ENCODE measurements at regions of chr12 and their contacts with region 1.

Region 1: GRCh38 chr12:8544295-8544694 is 3.6 kb upstream of the CLEC4E start:
- DNase-seq: peak; percentile 56 to 82 (median 62)
- H3K4me3 ChIP-seq: no peak overlapping the region
- H3K4me3 Mint-ChIP-seq: peak overlapping the region in 6 of 7 donors; percentile 6 to 59 (median 32)
- H3K27ac ChIP-seq: no peak overlapping the region
- H3K27ac Mint-ChIP-seq: no peak overlapping the region
- H3K4me1 ChIP-seq: no peaks in the 10 kb centered on the region
- H3K4me1 Mint-ChIP-seq: peaks cover 9 to 14% (median 10%) of the 10 kb centered on the region in 3 donors
- H3K27me3 ChIP-seq: peaks cover 10% of the 10 kb centered on the region
- H3K27me3 Mint-ChIP-seq: peaks cover 18 to 32% of the 10 kb centered on the region in 2 donors

Region 2: DNA sequence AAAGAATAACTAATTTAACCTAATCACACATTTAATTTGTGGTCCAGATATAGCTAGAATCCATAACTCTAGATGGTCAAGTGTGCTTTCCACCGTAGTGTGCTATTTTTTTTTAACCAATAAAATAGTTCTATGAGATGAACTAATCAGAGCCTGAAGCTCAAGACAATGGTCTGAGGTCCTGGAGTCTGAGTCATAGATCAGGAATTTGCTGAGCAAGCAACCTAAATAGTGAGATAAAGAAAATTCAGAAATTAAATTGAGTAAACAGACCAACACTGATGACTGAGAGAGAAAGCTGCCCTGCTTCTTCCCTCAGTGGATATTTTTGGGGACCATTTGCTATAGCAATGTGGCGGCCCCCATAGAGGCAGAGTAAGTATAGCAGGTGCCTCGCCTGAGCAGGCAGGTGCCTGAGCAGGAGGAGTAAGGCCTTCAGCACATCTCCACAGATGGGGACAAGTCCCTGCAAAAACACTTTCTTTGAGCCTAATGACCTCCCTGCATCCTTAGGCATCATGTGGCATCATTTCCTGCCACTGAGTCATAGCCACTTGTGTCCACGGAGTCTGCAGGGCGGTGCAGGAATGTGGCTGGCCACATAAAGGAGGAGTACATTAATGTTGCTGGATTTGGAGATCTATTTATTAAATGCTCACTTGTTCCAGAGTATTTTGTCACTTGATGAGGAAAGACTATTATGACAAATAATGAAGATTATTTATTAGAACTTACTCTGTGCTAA is 10.3 kb after region 1 on chr12:
- CTCF ChIA-PET with region 1: interaction called, 13 read pairs
- POLR2A ChIA-PET with region 1: no interaction called
- DNase-seq: no peak
- H3K4me3 ChIP-seq: no peak overlapping the region
- H3K4me3 Mint-ChIP-seq: no peak overlapping the region
- H3K27ac ChIP-seq: no peak overlapping the region
- H3K27ac Mint-ChIP-seq: no peak overlapping the region
- H3K4me1 ChIP-seq: no peaks in the 10 kb centered on the region
- H3K4me1 Mint-ChIP-seq: peaks cover 0 to 5% (median 1%) of the 10 kb centered on the region in 3 donors
- H3K27me3 ChIP-seq: no peaks in the 10 kb centered on the region
- H3K27me3 Mint-ChIP-seq: peaks cover 0 to 1% of the 10 kb centered on the region in 2 donors

Region 3: GRCh38 chr12:8572507-8572906 is 28.2 kb after region 1 on chr12:
- CTCF ChIA-PET with region 1: interaction called, 17 read pairs
- POLR2A ChIA-PET with region 1: no interaction called
- DNase-seq: peak in 2 of 5 donors; percentile 7 to 19
- H3K4me3 ChIP-seq: no peak overlapping the region
- H3K4me3 Mint-ChIP-seq: peak overlapping the region in 5 of 7 donors; percentile 12 to 72 (median 58)
- H3K27ac ChIP-seq: no peak overlapping the region
- H3K27ac Mint-ChIP-seq: peak overlapping the region; percentile 3 to 90 (median 68)
- H3K4me1 ChIP-seq: peaks cover 6% of the 10 kb centered on the region
- H3K4me1 Mint-ChIP-seq: peaks cover 12 to 17% (median 15%) of the 10 kb centered on the region in 3 donors
- H3K27me3 ChIP-seq: no peaks in the 10 kb centered on the region
- H3K27me3 Mint-ChIP-seq: peaks cover 1 to 3% of the 10 kb centered on the region in 2 donors

Region 4: GRCh38 chr12:8609061-8609570 is 64.8 kb after region 1 on chr12:
- CTCF ChIA-PET with region 1: interaction called, 22 read pairs
- POLR2A ChIA-PET with region 1: no interaction called
- DNase-seq: no peak
- H3K4me3 ChIP-seq: peak overlapping the region; percentile 4
- H3K4me3 Mint-ChIP-seq: peak overlapping the region in 6 of 7 donors; percentile 27 to 70 (median 54)
- H3K27ac ChIP-seq: no peak overlapping the region
- H3K27ac Mint-ChIP-seq: peak overlapping the region in 2 of 8 donors; percentile 5 to 30
- H3K4me1 ChIP-seq: peaks cover 3% of the 10 kb centered on the region
- H3K4me1 Mint-ChIP-seq: peaks cover 10 to 12% (median 11%) of the 10 kb centered on the region in 3 donors
- H3K27me3 ChIP-seq: no peaks in the 10 kb centered on the region
- H3K27me3 Mint-ChIP-seq: peaks cover 10 to 12% of the 10 kb centered on the region in 2 donors

Region 5: GRCh38 chr12:8629486-8630033 is 85.3 kb after region 1 on chr12:
- CTCF ChIA-PET with region 1: no interaction called
- POLR2A ChIA-PET with region 1: no interaction called
- DNase-seq: no peak
- H3K4me3 ChIP-seq: no peak overlapping the region
- H3K4me3 Mint-ChIP-seq: no peak overlapping the region
- H3K27ac ChIP-seq: no peak overlapping the region
- H3K27ac Mint-ChIP-seq: no peak overlapping the region
- H3K4me1 ChIP-seq: no peaks in the 10 kb centered on the region
- H3K4me1 Mint-ChIP-seq: peaks cover 0 to 9% (median 1%) of the 10 kb centered on the region in 3 donors
- H3K27me3 ChIP-seq: no peaks in the 10 kb centered on the region
- H3K27me3 Mint-ChIP-seq: no peaks in the 10 kb centered on the region

Region 6: GRCh38 chr12:8860165-8860961 is 316.1 kb after region 1 on chr12:
- CTCF ChIA-PET with region 1: interaction called, 16 read pairs
- POLR2A ChIA-PET with region 1: no interaction called
- DNase-seq: peak; percentile 7 to 59 (median 21)
- H3K4me3 ChIP-seq: no peak overlapping the region
- H3K4me3 Mint-ChIP-seq: no peak overlapping the region
- H3K27ac ChIP-seq: no peak overlapping the region
- H3K27ac Mint-ChIP-seq: no peak overlapping the region
- H3K4me1 ChIP-seq: no peaks in the 10 kb centered on the region
- H3K4me1 Mint-ChIP-seq: no peaks in the 10 kb centered on the region
- H3K27me3 ChIP-seq: no peaks in the 10 kb centered on the region
- H3K27me3 Mint-ChIP-seq: peaks cover 0 to 13% of the 10 kb centered on the region in 2 donors